ENCODE measurements at regions of chr7 and their contacts with region 1.

Region 1: GRCh38 chr7:96495751-96496216 is 173.9 kb upstream of the SLC25A13 start:
- DNase-seq: peak; percentile 15
- H3K4me3 Mint-ChIP-seq: peak overlapping the region; percentile 60
- H3K27ac Mint-ChIP-seq: peak overlapping the region; percentile 86
- H3K4me1 Mint-ChIP-seq: peaks cover 20% of the 10 kb centered on the region
- H3K27me3 Mint-ChIP-seq: peaks cover 7% of the 10 kb centered on the region

Region 2: GRCh38 chr7:95511716-95512260 is 984.0 kb before region 1 on chr7:
- intact Hi-C with region 1: loop called (anchors 10 kb)
- DNase-seq: peak; percentile 31
- H3K4me3 Mint-ChIP-seq: no peak overlapping the region
- H3K27ac Mint-ChIP-seq: no peak overlapping the region
- H3K4me1 Mint-ChIP-seq: no peaks in the 10 kb centered on the region
- H3K27me3 Mint-ChIP-seq: peaks cover 8% of the 10 kb centered on the region

Region 3: DNA sequence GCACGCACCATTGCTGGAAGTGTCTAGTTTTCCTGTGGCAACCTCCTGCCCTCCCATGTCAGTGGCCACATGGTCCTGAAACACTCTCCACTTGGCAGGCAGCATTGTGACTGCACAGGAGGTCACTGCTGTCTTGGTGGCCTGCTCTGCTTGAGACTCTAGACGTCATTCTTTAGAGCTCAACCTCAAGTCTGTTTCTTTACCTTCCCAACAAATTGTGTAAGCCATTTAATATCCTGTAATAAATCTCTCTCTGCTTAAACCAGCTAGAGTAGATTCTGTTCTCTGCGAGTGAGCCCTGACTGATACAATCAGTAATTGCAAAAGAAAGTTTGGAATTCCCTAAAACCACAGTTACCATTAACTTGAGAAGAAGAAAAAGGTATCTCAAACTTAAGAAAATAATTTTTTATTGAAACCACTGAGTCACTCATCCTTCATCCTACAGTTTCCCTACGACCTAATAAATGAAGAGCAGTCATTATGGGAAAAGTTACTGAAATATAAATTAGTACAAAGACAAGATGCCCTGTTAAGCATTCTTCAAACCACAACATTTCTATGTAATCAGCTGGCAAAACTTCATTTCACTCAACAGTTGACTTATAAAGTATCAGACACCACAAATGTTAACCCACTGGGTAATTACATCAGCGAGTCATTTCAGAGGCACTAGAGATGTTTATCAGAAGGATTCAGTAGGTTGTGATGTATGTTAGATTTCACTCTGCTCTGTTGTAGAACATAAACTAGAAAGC is 191.9 kb before region 1 on chr7:
- intact Hi-C with region 1: loop called (anchors 1 kb)
- DNase-seq: no peak
- H3K4me3 Mint-ChIP-seq: peak overlapping the region; percentile 0
- H3K27ac Mint-ChIP-seq: peak overlapping the region; percentile 62
- H3K4me1 Mint-ChIP-seq: peaks cover 46% of the 10 kb centered on the region
- H3K27me3 Mint-ChIP-seq: no peaks in the 10 kb centered on the region

Region 4: DNA sequence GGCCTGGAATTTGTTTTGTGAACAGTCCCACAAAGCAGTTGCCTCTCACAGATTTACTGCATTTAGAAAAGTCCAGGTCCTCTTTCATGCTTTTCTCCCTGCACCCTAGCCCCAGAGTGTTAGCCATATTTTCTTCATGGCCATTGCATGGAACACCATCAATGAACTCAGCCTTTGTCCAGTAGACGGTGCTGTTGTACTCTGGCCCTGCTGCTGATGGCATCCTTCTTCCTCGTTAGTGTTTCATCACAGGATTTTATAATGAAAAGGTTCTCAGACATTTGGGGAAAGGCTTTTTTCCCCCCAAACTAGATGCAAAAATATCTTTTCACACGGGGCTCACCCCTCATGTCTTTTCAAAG is 80.9 kb before region 1 on chr7:
- intact Hi-C with region 1: loop called (anchors 5 kb)
- DNase-seq: peak; percentile 30
- H3K4me3 Mint-ChIP-seq: no peak overlapping the region
- H3K27ac Mint-ChIP-seq: no peak overlapping the region
- H3K4me1 Mint-ChIP-seq: no peaks in the 10 kb centered on the region
- H3K27me3 Mint-ChIP-seq: peaks cover 10% of the 10 kb centered on the region

Region 5: GRCh38 chr7:96479015-96479645 is 16.7 kb before region 1 on chr7:
- intact Hi-C with region 1: loop called (anchors 1 kb)
- DNase-seq: no peak
- H3K4me3 Mint-ChIP-seq: peak overlapping the region; percentile 46
- H3K27ac Mint-ChIP-seq: peak overlapping the region; percentile 80
- H3K4me1 Mint-ChIP-seq: peaks cover 29% of the 10 kb centered on the region
- H3K27me3 Mint-ChIP-seq: peaks cover 2% of the 10 kb centered on the region

Region 6: GRCh38 chr7:96837593-96837992 is 341.8 kb after region 1 on chr7:
- intact Hi-C with region 1: loop called (anchors 1 kb)
- DNase-seq: peak; percentile 17
- H3K4me3 Mint-ChIP-seq: peak overlapping the region; percentile 57
- H3K27ac Mint-ChIP-seq: peak overlapping the region; percentile 74
- H3K4me1 Mint-ChIP-seq: peaks cover 15% of the 10 kb centered on the region
- H3K27me3 Mint-ChIP-seq: peaks cover 31% of the 10 kb centered on the region

Measured in activated T-helper 1 cell treated with anti-CD3 and anti-CD28 coated beads, Interleukin-12 subunit alpha, Interleukin-12 subunit beta, Interleukin-2, Interleukin-4 antibody, amounts not matched to agents 30 ng/mL and 10 ng/mL and 1 ng/mL, durations not matched to agents 14 hours and 24 hours and 36 hours (primary cell).